AG04450 (cell line): ENCODE measurements at regions of chr17 and their contacts with region 1.

Region 1: DNA sequence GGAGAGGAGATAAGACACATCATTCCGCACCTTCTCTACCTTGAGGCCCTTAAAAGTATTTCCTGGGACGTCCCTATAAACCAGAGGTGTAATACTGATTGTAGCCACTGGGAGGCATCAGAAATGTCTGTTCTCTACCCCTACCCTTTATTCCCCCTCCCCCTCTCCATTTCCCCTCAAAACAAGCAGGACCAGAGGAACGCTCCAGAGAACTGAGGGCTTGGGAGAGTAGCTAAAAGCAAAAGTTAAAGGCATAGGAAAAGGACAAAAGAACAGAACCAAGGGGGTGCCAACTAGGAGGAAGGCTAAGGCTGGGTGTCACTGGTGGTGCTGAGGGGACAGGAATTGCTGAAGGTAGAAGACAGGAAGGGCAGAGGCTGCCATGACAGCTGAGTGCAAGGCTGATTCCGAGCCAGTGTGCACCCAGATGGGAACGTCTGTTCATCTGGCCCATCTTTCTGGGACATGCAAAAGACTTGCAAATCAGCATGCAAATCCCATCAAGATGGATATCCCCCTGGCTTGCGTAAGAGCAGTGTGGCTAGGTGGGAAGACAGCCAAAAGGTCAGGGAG is 6.7 kb downstream of the CAMTA2 start:
- DNase-seq: no peak
- H3K4me3 ChIP-seq: no peak overlapping the region
- H3K27ac ChIP-seq: no peak overlapping the region
- H3K27me3 ChIP-seq: no peaks in the 10 kb centered on the region
- CTCF ChIP-seq: peak; percentile 71

Region 2: DNA sequence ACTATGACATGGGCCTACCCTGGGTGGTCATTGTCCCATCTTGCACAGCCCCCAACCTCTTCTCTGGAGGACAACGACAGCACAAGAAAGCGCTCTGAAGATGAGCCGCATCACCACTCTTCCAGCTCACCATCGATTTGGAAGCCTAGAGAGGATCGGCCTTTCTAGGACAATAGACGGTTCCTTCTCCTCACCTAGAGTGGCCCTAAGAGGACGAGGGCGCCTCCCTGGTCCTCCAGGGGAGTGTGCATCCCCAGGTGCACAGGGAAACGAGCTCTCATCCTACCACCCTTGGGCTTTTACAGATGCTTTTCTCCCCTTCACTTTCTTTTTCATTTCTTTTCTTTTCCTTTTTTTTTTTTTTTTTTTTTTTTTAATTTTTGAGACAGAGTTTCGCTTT is 74.8 kb after region 1 on chr17:
- CTCF ChIA-PET with region 1: interaction called, 46 read pairs
- POLR2A ChIA-PET with region 1: no interaction called
- DNase-seq: no peak
- H3K4me3 ChIP-seq: no peak overlapping the region
- H3K27ac ChIP-seq: no peak overlapping the region
- H3K27me3 ChIP-seq: no peaks in the 10 kb centered on the region
- CTCF ChIP-seq: no peak

Region 3: DNA sequence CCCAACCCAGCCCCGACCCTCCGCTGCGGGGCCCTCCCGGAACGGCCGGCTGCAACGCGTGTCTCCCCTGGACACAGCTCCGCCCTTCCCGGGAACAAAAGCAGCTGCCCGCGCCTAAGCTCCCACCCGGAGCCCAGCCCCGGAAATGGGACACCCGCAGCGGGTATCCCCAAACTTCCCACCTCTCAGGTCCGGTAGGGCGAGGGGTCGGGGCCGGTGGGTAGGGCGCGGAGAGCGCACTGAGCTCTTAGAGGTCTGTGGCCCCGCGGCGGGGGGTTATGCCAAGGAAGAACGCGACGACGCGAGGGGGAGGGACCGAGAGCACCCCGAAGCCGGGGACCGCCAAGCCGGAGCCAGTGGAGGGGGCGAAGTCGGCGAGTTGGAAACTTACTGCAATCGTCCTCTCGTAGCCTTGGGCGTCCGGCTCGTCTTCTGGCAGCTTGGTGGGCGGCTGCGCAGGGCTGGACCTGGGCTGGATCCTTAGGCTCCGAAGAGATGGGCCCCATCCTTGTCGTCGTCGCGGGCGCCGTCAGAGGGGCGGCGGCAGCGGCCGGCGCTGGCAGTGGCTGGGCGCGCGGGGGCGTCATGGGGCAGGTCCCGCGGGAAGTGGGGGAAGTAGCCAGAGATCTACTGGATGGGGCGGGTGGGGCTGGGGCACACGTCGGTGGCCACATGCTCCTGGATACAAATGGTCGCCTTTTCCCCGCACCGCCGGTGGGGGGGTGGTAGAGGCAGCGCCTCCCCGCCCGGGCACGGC is 142.0 kb after region 1 on chr17:
- CTCF ChIA-PET with region 1: no interaction called
- POLR2A ChIA-PET with region 1: no interaction called
- DNase-seq: no peak
- H3K4me3 ChIP-seq: peak overlapping the region; percentile 56
- H3K27ac ChIP-seq: no peak overlapping the region
- H3K27me3 ChIP-seq: peaks cover 14% of the 10 kb centered on the region
- CTCF ChIP-seq: no peak